Calu3 (cell line): ENCODE measurements at regions of chr3 and their contacts with region 1.

Region 1: GRCh38 chr3:125478326-125478725 is 41.7 kb downstream of the SNX4 start:
- DNase-seq: no peak
- H3K4me3 Mint-ChIP-seq: no peak overlapping the region
- H3K27ac Mint-ChIP-seq: no peak overlapping the region
- H3K4me1 Mint-ChIP-seq: no peaks in the 10 kb centered on the region
- H3K27me3 Mint-ChIP-seq: no peaks in the 10 kb centered on the region
- CTCF ChIP-seq: no peak

Region 2: DNA sequence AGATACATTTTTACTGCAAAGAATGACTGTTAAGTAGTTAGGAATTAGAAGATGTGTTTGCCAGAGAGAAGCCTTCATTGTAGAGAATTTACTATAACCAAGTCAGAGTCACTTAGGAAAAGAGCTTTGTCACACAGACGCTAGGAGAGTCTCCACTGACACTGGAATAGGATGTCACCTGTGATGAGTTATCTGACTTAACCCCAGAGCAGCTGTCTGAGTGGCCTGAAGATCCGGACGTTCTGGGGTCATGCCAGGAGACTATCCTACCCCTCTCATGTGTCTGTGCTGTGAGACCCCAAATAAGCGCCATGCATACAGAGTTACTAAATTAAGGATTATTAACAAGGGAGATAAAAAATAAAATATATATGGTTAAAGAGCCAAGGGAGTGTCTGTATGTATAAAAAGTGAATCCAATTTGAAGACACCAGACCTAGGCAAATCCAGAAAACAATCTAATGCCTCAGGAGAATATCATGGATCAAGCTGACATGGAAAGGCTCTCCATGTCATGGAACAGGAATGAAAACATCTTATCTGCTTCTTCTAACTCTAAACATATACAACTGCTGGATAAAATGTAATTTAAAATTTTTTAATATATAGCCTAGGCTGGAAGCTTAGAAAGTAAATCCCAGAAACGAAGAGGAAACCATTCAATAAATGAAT is 634.7 kb before region 1 on chr3:
- CTCF ChIA-PET with region 1: interaction called, 10 read pairs
- intact Hi-C with region 1: no loop called
- DNase-seq: no peak
- H3K4me3 Mint-ChIP-seq: no peak overlapping the region
- H3K27ac Mint-ChIP-seq: no peak overlapping the region
- H3K4me1 Mint-ChIP-seq: peaks cover 28% of the 10 kb centered on the region
- H3K27me3 Mint-ChIP-seq: no peaks in the 10 kb centered on the region
- CTCF ChIP-seq: no peak

Region 3: DNA sequence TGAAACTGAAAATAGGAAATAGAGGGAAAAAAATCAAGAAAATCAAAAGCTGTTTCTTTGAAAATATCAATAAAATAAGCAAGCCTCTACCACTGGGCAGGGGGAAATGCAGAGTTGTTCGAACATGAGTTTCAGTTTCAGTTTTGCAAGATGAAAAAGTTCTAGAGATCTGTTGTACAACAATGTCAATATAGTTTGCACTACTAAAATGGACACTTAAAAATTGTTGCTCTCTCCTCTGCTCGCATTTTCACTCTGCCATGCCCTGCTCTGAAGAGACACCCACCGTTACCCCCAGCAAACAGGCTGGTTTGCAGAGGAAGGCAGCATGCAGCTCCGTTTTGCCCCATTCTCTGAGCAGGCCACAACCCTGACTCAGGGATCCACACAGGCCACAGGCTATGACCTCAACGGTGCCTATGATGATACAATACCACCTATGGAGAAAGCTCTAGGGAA is 167.7 kb before region 1 on chr3:
- CTCF ChIA-PET with region 1: no interaction called
- intact Hi-C with region 1: no loop called
- DNase-seq: no peak
- H3K4me3 Mint-ChIP-seq: no peak overlapping the region
- H3K27ac Mint-ChIP-seq: no peak overlapping the region
- H3K4me1 Mint-ChIP-seq: no peaks in the 10 kb centered on the region
- H3K27me3 Mint-ChIP-seq: no peaks in the 10 kb centered on the region
- CTCF ChIP-seq: no peak